Caco-2 (cell line): ENCODE measurements at regions of chr20 and their contacts with region 1.

Region 1: DNA sequence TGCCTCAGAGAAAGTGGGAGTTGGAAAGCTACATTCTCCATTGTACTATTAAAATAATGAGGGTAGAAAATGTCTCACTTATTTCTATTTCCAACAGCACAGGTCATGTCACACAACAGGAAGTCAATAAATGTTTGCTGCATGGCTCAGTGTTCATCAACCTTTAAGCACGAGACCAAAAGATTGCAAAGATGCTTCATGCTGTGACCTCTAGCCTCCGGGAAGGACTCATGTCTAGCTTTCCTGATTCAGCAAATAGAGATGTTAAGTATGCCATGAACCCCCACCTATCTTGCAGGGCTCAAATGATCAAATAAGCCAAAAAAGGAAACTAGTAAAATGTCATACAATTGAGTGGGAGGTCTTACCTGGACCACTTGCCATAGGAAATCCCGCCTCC is 57.4 kb downstream of the NCOA6 start:
- DNase-seq: no peak
- H3K4me3 ChIP-seq: no peak overlapping the region
- H3K4me3 Mint-ChIP-seq: no peak overlapping the region
- H3K27ac Mint-ChIP-seq: no peak overlapping the region
- H3K4me1 ChIP-seq: 0 out of 2 replicates have a peak, but pooled peaks cover 4% of the 10 kb centered on the region
- H3K4me1 Mint-ChIP-seq: peaks cover 7% of the 10 kb centered on the region
- H3K27me3 ChIP-seq: no peaks in the 10 kb centered on the region
- H3K27me3 Mint-ChIP-seq: no peaks in the 10 kb centered on the region
- CTCF ChIP-seq: no peak

Region 2: DNA sequence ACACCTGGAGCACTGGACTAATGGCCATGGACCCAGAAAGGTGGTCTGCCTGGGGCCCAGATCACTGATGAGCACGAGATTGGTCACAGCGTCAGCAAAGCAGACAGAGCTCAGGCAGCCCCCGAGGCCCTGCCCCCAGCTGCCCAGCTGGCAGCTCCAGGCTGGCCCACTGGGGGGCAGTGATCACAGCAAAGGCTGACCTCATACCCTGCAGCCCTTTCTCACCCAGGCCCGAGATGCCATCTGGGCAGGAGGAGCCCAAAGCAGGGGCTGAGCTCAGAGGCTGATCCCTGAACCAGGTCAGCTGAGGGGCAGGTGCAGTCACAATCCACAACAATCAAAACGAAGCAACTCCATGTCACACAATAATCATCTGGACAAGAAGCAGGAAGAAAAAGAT is 205.5 kb before region 1 on chr20:
- CTCF ChIA-PET with region 1: interaction called, 17 read pairs
- POLR2A ChIA-PET with region 1: no interaction called
- intact Hi-C with region 1: no loop called
- DNase-seq: peak in 1 of 2 experiments; percentile 56
- H3K4me3 ChIP-seq: no peak overlapping the region
- H3K4me3 Mint-ChIP-seq: no peak overlapping the region
- H3K27ac Mint-ChIP-seq: no peak overlapping the region
- H3K4me1 ChIP-seq: no peaks in the 10 kb centered on the region
- H3K4me1 Mint-ChIP-seq: no peaks in the 10 kb centered on the region
- H3K27me3 ChIP-seq: no peaks in the 10 kb centered on the region
- H3K27me3 Mint-ChIP-seq: no peaks in the 10 kb centered on the region
- CTCF ChIP-seq: peak; percentile 52 to 61

Region 3: GRCh38 chr20:34732523-34732922 is 35.6 kb before region 1 on chr20:
- CTCF ChIA-PET with region 1: interaction called, 15 read pairs
- POLR2A ChIA-PET with region 1: interaction called, 4 read pairs
- intact Hi-C with region 1: no loop called
- DNase-seq: no peak
- H3K4me3 ChIP-seq: no peak overlapping the region
- H3K4me3 Mint-ChIP-seq: no peak overlapping the region
- H3K27ac Mint-ChIP-seq: no peak overlapping the region
- H3K4me1 ChIP-seq: no peaks in the 10 kb centered on the region
- H3K4me1 Mint-ChIP-seq: no peaks in the 10 kb centered on the region
- H3K27me3 ChIP-seq: no peaks in the 10 kb centered on the region
- H3K27me3 Mint-ChIP-seq: no peaks in the 10 kb centered on the region
- CTCF ChIP-seq: no peak

Region 4: GRCh38 chr20:34825530-34826362 is 57.6 kb after region 1 on chr20 and contains the start of gene NCOA6:
- CTCF ChIA-PET with region 1: interaction called, 6 read pairs
- POLR2A ChIA-PET with region 1: no interaction called
- intact Hi-C with region 1: loop called (anchors 1 kb)
- DNase-seq: peak; percentile 92 to 94
- H3K4me3 ChIP-seq: peak within 1 kb of the TSS; percentile 97
- H3K4me3 Mint-ChIP-seq: peak within 1 kb of the TSS; percentile 92
- H3K27ac Mint-ChIP-seq: peak within 1 kb of the TSS; percentile 83
- H3K4me1 ChIP-seq: peaks cover 15% of the 10 kb centered on the region
- H3K4me1 Mint-ChIP-seq: peaks cover 20% of the 10 kb centered on the region
- H3K27me3 ChIP-seq: no peaks in the 10 kb centered on the region
- H3K27me3 Mint-ChIP-seq: no peaks in the 10 kb centered on the region
- CTCF ChIP-seq: no peak
- total RNA-seq, gene NCOA6: 65.1 and 72.7 TPM in 2 replicates

Region 5: DNA sequence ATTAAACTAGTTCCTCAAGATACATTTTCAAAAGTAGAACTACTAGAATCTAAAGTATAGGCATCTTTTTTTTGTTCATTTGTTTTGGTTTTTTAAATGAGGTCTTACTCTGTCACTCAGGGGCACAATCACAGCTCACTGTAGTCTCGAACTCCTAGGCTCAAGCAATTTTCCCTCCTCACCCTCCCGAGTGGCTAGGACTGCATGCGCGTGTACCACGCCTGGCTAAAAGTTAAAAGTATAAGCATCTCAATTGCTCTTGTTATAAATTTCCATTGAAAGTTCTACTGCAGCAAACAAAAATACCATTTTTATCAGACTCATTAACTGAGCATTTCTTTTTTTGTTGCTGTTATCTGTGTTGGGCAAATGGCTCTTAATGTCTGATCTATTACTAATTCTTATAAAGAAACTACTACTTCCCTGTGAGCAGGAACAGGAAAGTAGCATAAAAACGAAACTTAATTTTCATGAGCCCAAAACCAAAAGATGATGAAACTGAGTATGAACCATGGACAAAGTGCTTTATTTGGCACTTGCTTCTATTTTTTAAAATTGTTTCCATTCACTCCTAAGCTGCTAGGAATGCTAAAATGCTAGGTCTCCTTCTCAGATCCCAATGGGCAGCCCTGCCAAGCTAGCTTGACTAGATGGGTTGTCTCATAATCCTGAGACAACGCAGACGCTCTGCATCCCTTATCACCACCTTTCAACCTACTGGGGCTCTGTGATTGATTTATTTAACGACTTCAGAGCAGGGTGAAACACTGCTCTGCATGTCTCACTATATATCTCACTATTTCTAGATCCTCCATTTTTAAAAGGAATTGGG is 287.6 kb after region 1 on chr20:
- CTCF ChIA-PET with region 1: no interaction called
- POLR2A ChIA-PET with region 1: no interaction called
- intact Hi-C with region 1: no loop called
- DNase-seq: no peak
- H3K4me3 ChIP-seq: no peak overlapping the region
- H3K4me3 Mint-ChIP-seq: no peak overlapping the region
- H3K27ac Mint-ChIP-seq: peak overlapping the region; percentile 8
- H3K4me1 ChIP-seq: peaks cover 3% of the 10 kb centered on the region; the same call in 1 of the 2 replicates
- H3K4me1 Mint-ChIP-seq: no peaks in the 10 kb centered on the region
- H3K27me3 ChIP-seq: no peaks in the 10 kb centered on the region
- H3K27me3 Mint-ChIP-seq: no peaks in the 10 kb centered on the region
- CTCF ChIP-seq: no peak

Region 6: GRCh38 chr20:35551503-35551902 is 783.4 kb after region 1 on chr20:
- CTCF ChIA-PET with region 1: no interaction called
- POLR2A ChIA-PET with region 1: no interaction called
- intact Hi-C with region 1: no loop called
- DNase-seq: no peak
- H3K4me3 ChIP-seq: no peak overlapping the region
- H3K4me3 Mint-ChIP-seq: no peak overlapping the region
- H3K27ac Mint-ChIP-seq: no peak overlapping the region
- H3K4me1 ChIP-seq: no peaks in the 10 kb centered on the region
- H3K4me1 Mint-ChIP-seq: no peaks in the 10 kb centered on the region
- H3K27me3 ChIP-seq: no peaks in the 10 kb centered on the region
- H3K27me3 Mint-ChIP-seq: no peaks in the 10 kb centered on the region
- CTCF ChIP-seq: no peak